ENCODE measurements at regions of chr4 and their contacts with region 1.

Region 1: GRCh38 chr4:113383111-113383785 is 333.8 kb downstream of the ANK2 start:
- DNase-seq: peak; percentile 97
- H3K4me3 ChIP-seq: no peak overlapping the region
- H3K27ac ChIP-seq: peak overlapping the region; percentile 84
- H3K4me1 ChIP-seq: peaks cover 44% of the 10 kb centered on the region
- H3K27me3 ChIP-seq: no peaks in the 10 kb centered on the region
- CTCF ChIP-seq: no peak

Region 2: GRCh38 chr4:112231779-112232713 is 1151.2 kb before region 1 on chr4 and contains the start of gene AP1AR:
- CTCF ChIA-PET with region 1: no interaction called
- POLR2A ChIA-PET with region 1: no interaction called
- intact Hi-C with region 1: no loop called
- DNase-seq: peak; percentile 91
- H3K4me3 ChIP-seq: peak within 1 kb of the TSS; percentile 96
- H3K27ac ChIP-seq: peak within 1 kb of the TSS; percentile 98
- H3K4me1 ChIP-seq: peaks cover 11% of the 10 kb centered on the region
- H3K27me3 ChIP-seq: no peaks in the 10 kb centered on the region
- CTCF ChIP-seq: peak; percentile 44; the same call in 1 of the 2 replicates
- total RNA-seq, gene AP1AR: 24.9 and 30.0 TPM in 2 replicates

Region 3: DNA sequence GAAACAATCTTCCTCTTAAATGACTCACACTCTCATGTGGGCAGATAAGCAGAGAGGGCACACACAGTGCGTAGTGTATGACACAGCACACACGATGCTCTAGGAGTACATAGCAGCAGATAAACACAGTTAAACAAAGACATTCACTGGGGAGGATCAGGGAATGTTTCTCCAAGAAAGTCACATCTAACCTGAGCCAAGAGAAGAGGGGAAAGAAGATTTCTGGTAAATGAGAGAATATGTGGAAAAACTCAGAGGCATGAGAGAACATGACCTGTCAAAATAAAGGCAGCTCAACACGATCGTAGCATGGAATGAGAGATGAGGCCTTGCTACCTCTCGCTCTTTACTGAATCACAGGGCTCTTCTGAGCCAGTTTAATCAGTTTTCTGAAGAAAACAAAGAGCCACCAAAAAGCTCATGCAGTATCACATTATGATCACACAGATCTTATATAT is 82.7 kb before region 1 on chr4:
- CTCF ChIA-PET with region 1: no interaction called
- POLR2A ChIA-PET with region 1: interaction called, 3 read pairs
- intact Hi-C with region 1: loop called (anchors 5 kb)
- DNase-seq: no peak
- H3K4me3 ChIP-seq: no peak overlapping the region
- H3K27ac ChIP-seq: peak overlapping the region; percentile 23
- H3K4me1 ChIP-seq: peaks cover 39% of the 10 kb centered on the region
- H3K27me3 ChIP-seq: no peaks in the 10 kb centered on the region
- CTCF ChIP-seq: no peak

Region 4: GRCh38 chr4:113513382-113513781 is 130.1 kb after region 1 on chr4:
- CTCF ChIA-PET with region 1: no interaction called
- POLR2A ChIA-PET with region 1: no interaction called
- intact Hi-C with region 1: no loop called
- DNase-seq: no peak
- H3K4me3 ChIP-seq: no peak overlapping the region
- H3K27ac ChIP-seq: no peak overlapping the region
- H3K4me1 ChIP-seq: no peaks in the 10 kb centered on the region
- H3K27me3 ChIP-seq: no peaks in the 10 kb centered on the region
- CTCF ChIP-seq: no peak

Measured in A673 (cell line).